Panc1 (cell line): ENCODE measurements at regions of chr14 and their contacts with region 1.

Region 1: GRCh38 chr14:42027271-42027670 is 420.6 kb downstream of the LRFN5 start:
- DNase-seq: no peak
- ATAC-seq: no peak
- H3K4me3 ChIP-seq: no peak overlapping the region
- H3K27ac ChIP-seq: no peak overlapping the region
- H3K4me1 ChIP-seq: no peaks in the 10 kb centered on the region
- H3K27me3 ChIP-seq: no peaks in the 10 kb centered on the region
- CTCF ChIP-seq: no peak

Region 2: DNA sequence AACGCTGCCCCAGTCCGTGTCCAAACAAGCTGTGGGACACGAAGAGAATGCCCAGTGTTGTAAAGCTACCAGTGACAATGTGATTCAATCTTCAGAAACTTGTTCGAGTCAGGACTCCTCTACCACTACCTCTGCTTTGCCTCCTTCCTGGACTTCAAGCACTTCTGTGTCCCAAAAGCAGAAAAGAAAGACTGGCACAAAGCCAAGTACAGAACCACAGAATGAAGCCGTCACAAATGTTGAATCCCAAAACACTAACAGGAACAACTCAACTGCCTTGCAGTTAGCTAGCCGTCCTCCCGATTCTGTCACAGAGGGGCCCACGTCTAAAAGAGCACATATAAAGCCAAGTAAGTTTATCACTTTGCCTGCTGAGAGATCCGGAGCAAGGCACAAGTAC is 135.7 kb before region 1 on chr14:
- CTCF ChIA-PET with region 1: no interaction called
- POLR2A ChIA-PET with region 1: no interaction called
- in situ Hi-C with region 1: no loop called
- intact Hi-C with region 1: no loop called
- DNase-seq: no peak
- ATAC-seq: no peak
- H3K4me3 ChIP-seq: no peak overlapping the region
- H3K27ac ChIP-seq: no peak overlapping the region
- H3K4me1 ChIP-seq: no peaks in the 10 kb centered on the region
- H3K27me3 ChIP-seq: no peaks in the 10 kb centered on the region
- CTCF ChIP-seq: no peak

Region 3: GRCh38 chr14:41972531-41972930 is 54.7 kb before region 1 on chr14:
- CTCF ChIA-PET with region 1: no interaction called
- POLR2A ChIA-PET with region 1: no interaction called
- in situ Hi-C with region 1: no loop called
- intact Hi-C with region 1: loop called (anchors 2 kb)
- DNase-seq: no peak
- ATAC-seq: no peak
- H3K4me3 ChIP-seq: no peak overlapping the region
- H3K27ac ChIP-seq: no peak overlapping the region
- H3K4me1 ChIP-seq: no peaks in the 10 kb centered on the region
- H3K27me3 ChIP-seq: no peaks in the 10 kb centered on the region
- CTCF ChIP-seq: no peak

Region 4: GRCh38 chr14:42374332-42374731 is 347.1 kb after region 1 on chr14:
- CTCF ChIA-PET with region 1: no interaction called
- POLR2A ChIA-PET with region 1: no interaction called
- in situ Hi-C with region 1: no loop called
- intact Hi-C with region 1: no loop called
- DNase-seq: no peak
- ATAC-seq: no peak
- H3K4me3 ChIP-seq: no peak overlapping the region
- H3K27ac ChIP-seq: no peak overlapping the region
- H3K4me1 ChIP-seq: no peaks in the 10 kb centered on the region
- H3K27me3 ChIP-seq: no peaks in the 10 kb centered on the region
- CTCF ChIP-seq: no peak